CD8-positive, alpha-beta T cell (primary cell): ENCODE measurements at regions of chrX and their contacts with region 1.

Region 1: DNA sequence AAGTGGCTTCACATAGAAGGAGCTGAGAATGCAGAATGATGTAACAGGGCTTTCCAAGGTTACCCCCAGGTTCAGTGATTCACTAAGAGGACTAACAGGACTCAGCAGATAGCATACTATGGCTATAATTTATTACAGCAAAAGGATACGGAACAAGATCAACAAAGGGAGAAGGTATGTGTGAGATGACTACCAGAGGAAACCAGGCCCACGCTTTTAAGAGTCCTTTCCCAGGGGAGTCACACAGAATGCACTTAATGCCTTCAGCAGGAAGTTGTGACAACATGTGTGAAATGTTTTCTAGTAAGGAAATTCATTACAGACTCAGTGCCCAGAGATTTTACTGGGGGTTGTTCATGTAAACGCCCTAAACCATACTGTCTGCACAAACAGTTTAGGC is 373.6 kb upstream of the MAGEB2 start:
- DNase-seq: no peak
- ATAC-seq: no peak
- H3K4me3 ChIP-seq: no peak overlapping the region
- H3K4me3 Mint-ChIP-seq: no peak overlapping the region
- H3K27ac ChIP-seq: no peak overlapping the region
- H3K27ac Mint-ChIP-seq: no peak overlapping the region
- H3K4me1 ChIP-seq: no peaks in the 10 kb centered on the region
- H3K4me1 Mint-ChIP-seq: no peaks in the 10 kb centered on the region
- H3K27me3 ChIP-seq: no peaks in the 10 kb centered on the region
- H3K27me3 Mint-ChIP-seq: no peaks in the 10 kb centered on the region
- CTCF ChIP-seq: no peak

Region 2: DNA sequence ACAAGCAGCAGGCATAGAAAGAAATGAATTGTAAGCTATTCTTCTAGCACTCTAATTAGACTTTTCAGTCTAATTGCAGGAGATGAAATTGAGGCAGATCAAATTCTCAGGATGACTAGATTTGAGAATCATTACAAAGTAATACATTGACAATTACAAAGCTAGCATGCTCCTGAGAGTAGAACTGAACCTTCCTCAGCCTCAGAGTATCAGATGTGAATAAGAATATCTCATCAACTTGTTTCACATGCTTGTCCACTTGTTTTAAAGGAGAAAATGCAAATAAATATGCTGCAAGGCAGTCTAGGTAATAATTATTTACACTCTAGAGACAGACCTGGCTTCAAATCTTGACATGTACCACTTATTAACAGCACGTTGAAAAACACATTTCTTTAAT is 117.4 kb before region 1 on chrX:
- CTCF ChIA-PET with region 1: no interaction called
- POLR2A ChIA-PET with region 1: no interaction called
- intact Hi-C with region 1: no loop called
- DNase-seq: no peak
- ATAC-seq: no peak
- H3K4me3 ChIP-seq: no peak overlapping the region
- H3K4me3 Mint-ChIP-seq: no peak overlapping the region
- H3K27ac ChIP-seq: no peak overlapping the region
- H3K27ac Mint-ChIP-seq: no peak overlapping the region
- H3K4me1 ChIP-seq: no peaks in the 10 kb centered on the region
- H3K4me1 Mint-ChIP-seq: no peaks in the 10 kb centered on the region
- H3K27me3 ChIP-seq: no peaks in the 10 kb centered on the region
- H3K27me3 Mint-ChIP-seq: no peaks in the 10 kb centered on the region
- CTCF ChIP-seq: no peak

Region 3: DNA sequence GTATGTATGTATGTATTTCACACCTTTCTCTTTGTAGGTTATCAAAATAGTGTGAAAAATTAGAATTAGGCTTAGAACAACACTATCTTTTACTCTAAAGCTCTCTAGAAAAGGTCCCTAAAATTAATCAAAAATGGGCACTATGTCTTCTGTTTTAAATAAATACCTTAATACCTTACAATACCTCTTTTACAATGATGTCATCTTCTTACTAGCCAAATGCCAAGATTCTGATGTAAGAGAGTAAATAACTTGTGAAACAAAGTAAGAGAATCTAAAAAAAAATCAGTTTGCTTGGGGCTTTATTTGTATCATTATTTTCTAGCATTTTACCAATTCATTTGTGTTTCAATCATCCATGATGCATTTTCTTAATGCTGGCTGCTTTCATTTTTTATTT is 28.6 kb before region 1 on chrX:
- CTCF ChIA-PET with region 1: no interaction called
- POLR2A ChIA-PET with region 1: no interaction called
- intact Hi-C with region 1: no loop called
- DNase-seq: no peak
- ATAC-seq: no peak
- H3K4me3 ChIP-seq: no peak overlapping the region
- H3K4me3 Mint-ChIP-seq: no peak overlapping the region
- H3K27ac ChIP-seq: no peak overlapping the region
- H3K27ac Mint-ChIP-seq: no peak overlapping the region
- H3K4me1 ChIP-seq: no peaks in the 10 kb centered on the region
- H3K4me1 Mint-ChIP-seq: no peaks in the 10 kb centered on the region
- H3K27me3 ChIP-seq: no peaks in the 10 kb centered on the region
- H3K27me3 Mint-ChIP-seq: no peaks in the 10 kb centered on the region
- CTCF ChIP-seq: no peak

Region 4: GRCh38 chrX:29903360-29903759 is 61.6 kb after region 1 on chrX:
- CTCF ChIA-PET with region 1: no interaction called
- POLR2A ChIA-PET with region 1: no interaction called
- intact Hi-C with region 1: loop called in 1 of 2 experiments (anchors 10 kb)
- DNase-seq: no peak
- ATAC-seq: no peak
- H3K4me3 ChIP-seq: no peak overlapping the region
- H3K4me3 Mint-ChIP-seq: no peak overlapping the region
- H3K27ac ChIP-seq: no peak overlapping the region
- H3K27ac Mint-ChIP-seq: no peak overlapping the region
- H3K4me1 ChIP-seq: no peaks in the 10 kb centered on the region
- H3K4me1 Mint-ChIP-seq: no peaks in the 10 kb centered on the region
- H3K27me3 ChIP-seq: no peaks in the 10 kb centered on the region
- H3K27me3 Mint-ChIP-seq: no peaks in the 10 kb centered on the region
- CTCF ChIP-seq: no peak